ENCODE measurements at regions of chr4 and their contacts with region 1.

Region 1: DNA sequence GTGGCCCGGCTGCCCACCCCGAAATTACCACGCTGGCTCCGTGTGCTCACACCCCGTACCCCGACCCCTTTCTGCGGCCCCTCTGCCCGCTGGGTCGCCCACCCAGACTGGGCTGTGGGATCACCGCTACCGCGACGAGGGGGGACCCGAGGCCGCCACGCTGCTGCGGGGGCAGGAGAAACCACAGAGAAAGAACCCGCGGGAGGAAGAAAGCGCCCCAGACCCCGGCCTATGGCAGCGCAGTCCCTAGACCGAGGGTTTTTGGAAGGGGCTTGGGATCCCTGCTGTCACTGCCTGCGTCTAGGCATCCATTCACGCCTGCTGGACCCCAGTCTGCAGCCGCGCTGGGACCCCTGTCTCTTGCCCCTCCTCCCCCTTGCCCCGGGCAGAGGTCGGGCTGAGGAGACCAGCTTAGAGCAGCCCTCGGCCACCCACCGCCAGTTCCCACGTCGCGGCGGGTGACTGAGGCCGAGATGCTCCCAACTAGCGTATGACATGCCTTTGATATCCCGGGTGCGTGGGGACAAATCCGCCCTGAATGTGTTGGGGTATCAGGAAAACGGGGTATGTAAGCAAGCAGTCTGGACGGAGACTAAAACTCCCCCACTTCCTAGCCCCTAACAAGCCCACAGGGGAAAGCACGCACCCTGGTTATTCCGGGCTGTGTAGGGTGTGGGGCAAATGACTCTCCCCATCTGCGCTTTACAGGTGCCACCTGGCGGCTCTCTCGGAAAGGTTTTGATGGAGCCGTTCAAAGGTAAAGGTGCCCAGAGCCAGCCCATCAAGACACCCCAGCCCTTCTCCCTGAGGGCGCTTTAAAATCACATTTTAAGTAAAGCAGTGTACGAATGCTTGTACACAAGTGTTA is 862 bp upstream of the INPP4B start:
- DNase-seq: peak; percentile 60
- H3K4me3 Mint-ChIP-seq: peak overlapping the region; percentile 89
- H3K27ac Mint-ChIP-seq: peak overlapping the region; percentile 80
- H3K4me1 Mint-ChIP-seq: peaks cover 18% of the 10 kb centered on the region
- H3K27me3 Mint-ChIP-seq: peaks cover 22% of the 10 kb centered on the region

Region 2: GRCh38 chr4:140861359-140862176 is 1985.4 kb before region 1 on chr4:
- intact Hi-C with region 1: loop called (anchors 5 kb)
- DNase-seq: peak; percentile 28
- H3K4me3 Mint-ChIP-seq: no peak overlapping the region
- H3K27ac Mint-ChIP-seq: no peak overlapping the region
- H3K4me1 Mint-ChIP-seq: peaks cover 7% of the 10 kb centered on the region
- H3K27me3 Mint-ChIP-seq: peaks cover 6% of the 10 kb centered on the region

Region 3: DNA sequence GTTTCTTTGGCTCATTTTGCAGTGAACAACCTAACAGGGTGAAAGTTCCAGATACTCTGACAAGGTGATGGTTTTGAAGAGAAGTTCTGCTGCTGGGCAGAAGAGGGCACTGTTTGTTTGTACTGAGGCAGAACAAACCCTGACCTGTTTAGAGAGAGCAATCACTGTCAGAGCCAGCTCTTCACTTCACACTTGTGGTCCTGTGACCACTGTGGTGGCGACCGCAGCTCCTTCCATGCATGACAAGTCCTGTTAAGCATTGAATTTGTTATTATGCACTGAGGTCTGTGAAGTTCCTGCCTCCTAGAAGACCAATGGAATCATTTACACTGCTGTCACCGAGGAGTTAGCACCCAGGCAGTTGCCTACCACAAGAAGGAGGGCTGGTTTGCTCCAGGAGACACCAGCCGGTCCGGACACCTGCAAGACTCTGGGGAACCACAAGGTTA is 1539.7 kb before region 1 on chr4:
- intact Hi-C with region 1: loop called (anchors 1 kb)
- DNase-seq: peak; percentile 49
- H3K4me3 Mint-ChIP-seq: no peak overlapping the region
- H3K27ac Mint-ChIP-seq: no peak overlapping the region
- H3K4me1 Mint-ChIP-seq: no peaks in the 10 kb centered on the region
- H3K27me3 Mint-ChIP-seq: peaks cover 2% of the 10 kb centered on the region

Region 4: DNA sequence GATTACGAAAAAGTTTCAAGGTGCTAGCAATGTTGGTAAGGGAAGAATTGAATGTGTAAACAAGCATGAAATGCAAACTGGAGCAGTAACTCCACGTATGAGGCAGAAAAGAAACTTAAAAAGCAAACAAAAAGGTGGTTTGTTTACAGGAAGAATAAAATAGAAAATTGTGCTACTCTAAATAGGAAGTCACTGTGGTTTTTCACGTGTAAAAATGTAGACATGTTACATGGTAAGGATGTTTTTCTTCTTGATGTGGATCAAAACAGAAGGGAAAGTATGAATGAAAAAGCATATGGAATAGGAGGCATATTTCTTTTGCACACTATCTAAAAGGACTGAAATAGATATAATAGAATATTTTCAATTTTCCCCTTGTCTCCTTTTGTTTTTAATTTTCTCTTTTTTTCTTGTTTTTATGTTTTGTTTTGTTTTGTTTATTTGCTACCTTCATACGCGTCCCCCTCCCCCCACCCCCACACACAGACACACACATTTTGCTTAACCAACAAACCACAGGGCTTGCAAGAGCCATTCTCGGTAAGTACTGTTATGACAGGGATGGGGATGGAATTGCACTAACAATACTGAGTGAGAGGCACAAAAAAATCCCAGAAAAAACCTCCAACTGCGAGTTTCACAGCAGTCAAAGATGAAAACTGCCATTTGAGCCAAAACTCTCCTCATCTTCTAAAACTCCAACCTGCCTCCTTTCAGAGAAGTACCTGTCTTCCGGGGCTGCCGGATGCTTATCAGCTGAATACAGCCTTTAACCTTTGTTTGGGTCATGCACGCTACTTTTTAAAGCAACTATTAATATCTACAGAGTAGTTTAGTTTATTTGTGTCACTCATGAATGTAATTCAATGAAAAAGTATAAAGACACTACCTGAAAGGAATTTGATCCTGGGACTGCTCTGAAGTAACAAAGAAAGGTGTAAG is 1074.8 kb before region 1 on chr4:
- intact Hi-C with region 1: loop called (anchors 10 kb)
- DNase-seq: peak; percentile 4
- H3K4me3 Mint-ChIP-seq: peak overlapping the region; percentile 56
- H3K27ac Mint-ChIP-seq: peak overlapping the region; percentile 44
- H3K4me1 Mint-ChIP-seq: peaks cover 22% of the 10 kb centered on the region
- H3K27me3 Mint-ChIP-seq: peaks cover 3% of the 10 kb centered on the region

Region 5: DNA sequence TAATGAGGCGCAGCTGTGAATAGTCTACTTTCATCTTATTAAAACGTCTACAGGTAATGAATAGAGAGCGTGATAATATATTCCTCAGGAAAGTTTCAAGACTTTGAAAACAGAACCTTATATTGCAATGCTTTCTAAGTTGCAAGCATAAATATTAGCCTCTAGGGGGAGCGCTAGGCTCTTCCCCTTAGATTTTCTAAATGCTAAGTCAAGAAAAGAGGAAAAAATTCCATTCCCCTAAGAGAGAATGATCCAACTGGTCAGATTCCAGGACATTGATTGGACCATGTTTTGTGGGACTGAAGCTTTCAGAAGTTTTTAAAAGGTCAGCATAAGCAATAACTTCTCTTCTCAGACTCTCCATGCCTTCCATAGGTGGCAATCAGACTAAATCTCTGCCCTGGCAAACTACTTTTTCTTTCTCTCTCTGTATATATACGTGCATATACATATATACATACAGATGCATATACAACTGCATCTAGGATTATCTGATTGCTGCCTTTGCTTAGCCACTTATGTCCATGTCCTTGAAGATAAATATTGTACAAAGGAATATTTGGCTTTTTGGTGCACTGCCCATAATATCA is 493.7 kb before region 1 on chr4:
- intact Hi-C with region 1: loop called (anchors 2 kb)
- DNase-seq: no peak
- H3K4me3 Mint-ChIP-seq: peak overlapping the region; percentile 42
- H3K27ac Mint-ChIP-seq: no peak overlapping the region
- H3K4me1 Mint-ChIP-seq: peaks cover 78% of the 10 kb centered on the region
- H3K27me3 Mint-ChIP-seq: no peaks in the 10 kb centered on the region

Region 6: GRCh38 chr4:143184217-143185116 is 337.5 kb after region 1 on chr4 and contains the start of gene USP38:
- intact Hi-C with region 1: loop called (anchors 2 kb)
- DNase-seq: peak; percentile 80
- H3K4me3 Mint-ChIP-seq: peak within 1 kb of the TSS; percentile 92
- H3K27ac Mint-ChIP-seq: peak within 1 kb of the TSS; percentile 98
- H3K4me1 Mint-ChIP-seq: peaks cover 62% of the 10 kb centered on the region
- H3K27me3 Mint-ChIP-seq: no peaks in the 10 kb centered on the region
- total RNA-seq, gene USP38: 29.8 and 32.0 TPM in 2 replicates

Region 7: GRCh38 chr4:143599827-143600226 is 752.9 kb after region 1 on chr4:
- intact Hi-C with region 1: no loop called
- DNase-seq: no peak
- H3K4me3 Mint-ChIP-seq: no peak overlapping the region
- H3K27ac Mint-ChIP-seq: no peak overlapping the region
- H3K4me1 Mint-ChIP-seq: no peaks in the 10 kb centered on the region
- H3K27me3 Mint-ChIP-seq: peaks cover 1% of the 10 kb centered on the region

Measured in activated T-helper 1 cell treated with anti-CD3 and anti-CD28 coated beads, Interleukin-12 subunit alpha, Interleukin-12 subunit beta, Interleukin-2, Interleukin-4 antibody, amounts not matched to agents 30 ng/mL and 10 ng/mL and 1 ng/mL, durations not matched to agents 14 hours and 24 hours and 36 hours (primary cell).